ENCODE measurements at regions of chr15 and their contacts with region 1.

Region 1: GRCh38 chr15:76190834-76191538 is 120.3 kb downstream of the ETFA start:
- DNase-seq: peak; percentile 88
- H3K4me3 ChIP-seq: peak overlapping the region; percentile 14
- H3K27ac ChIP-seq: no peak overlapping the region
- H3K4me1 ChIP-seq: no peaks in the 10 kb centered on the region
- H3K27me3 ChIP-seq: no peaks in the 10 kb centered on the region
- CTCF ChIP-seq: peak; percentile 46 to 94 (median 86)
- POLR2A ChIP-seq: no peak

Region 2: GRCh38 chr15:76285239-76285825 is 94.3 kb after region 1 on chr15:
- intact Hi-C with region 1: no loop called
- DNase-seq: no peak
- H3K4me3 ChIP-seq: no peak overlapping the region
- H3K27ac ChIP-seq: no peak overlapping the region
- H3K4me1 ChIP-seq: no peaks in the 10 kb centered on the region
- H3K27me3 ChIP-seq: no peaks in the 10 kb centered on the region
- CTCF ChIP-seq: peak in 1 of 4 experiments; percentile 32
- POLR2A ChIP-seq: no peak

Region 3: GRCh38 chr15:76311100-76311953 is 120.3 kb after region 1 on chr15 and contains the start of gene ETFA:
- intact Hi-C with region 1: loop called (anchors 10 kb)
- DNase-seq: peak; percentile 94
- H3K4me3 ChIP-seq: peak within 1 kb of the TSS; percentile 60 to 70
- H3K27ac ChIP-seq: peak within 1 kb of the TSS; percentile 72 to 79
- H3K4me1 ChIP-seq: no peaks in the 10 kb centered on the region
- H3K27me3 ChIP-seq: no peaks in the 10 kb centered on the region
- CTCF ChIP-seq: peak in 1 of 4 experiments; percentile 13
- POLR2A ChIP-seq: peak; percentile 96
- total RNA-seq, gene ETFA: 68.6 to 82.8 TPM

Region 4: DNA sequence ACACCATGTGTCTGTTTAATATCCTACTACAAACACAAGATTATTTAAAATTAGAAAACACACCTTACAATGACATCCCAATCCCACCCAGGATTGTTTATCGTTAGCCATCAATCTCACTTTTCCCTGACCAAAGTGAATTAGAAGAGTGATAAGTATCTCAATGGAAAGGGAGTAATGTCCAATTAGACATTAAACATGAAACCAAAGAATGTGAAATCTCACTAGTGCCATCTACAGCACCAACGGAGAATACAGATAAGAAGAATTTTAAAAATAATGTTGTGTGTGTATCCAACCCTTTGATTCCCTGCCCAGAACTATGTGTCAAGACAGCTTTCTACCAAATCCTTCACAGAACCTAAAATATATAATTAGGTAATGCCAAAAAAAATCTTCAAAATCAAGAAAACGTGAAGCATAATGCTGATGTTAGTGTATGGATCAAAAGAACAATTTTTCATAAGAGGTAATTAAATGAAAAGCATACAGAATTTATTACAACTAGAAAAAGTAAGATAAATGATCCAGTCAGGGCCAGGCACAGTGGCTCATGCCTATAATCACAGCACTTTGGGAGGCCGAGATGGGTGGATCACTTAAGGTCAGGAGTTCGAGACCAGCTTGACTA is 650.0 kb after region 1 on chr15:
- intact Hi-C with region 1: loop called (anchors 5 kb)
- DNase-seq: no peak
- H3K4me3 ChIP-seq: no peak overlapping the region
- H3K27ac ChIP-seq: no peak overlapping the region
- H3K4me1 ChIP-seq: no peaks in the 10 kb centered on the region
- H3K27me3 ChIP-seq: no peaks in the 10 kb centered on the region
- CTCF ChIP-seq: peak in 3 of 4 experiments; percentile 26 to 46 (median 45)
- POLR2A ChIP-seq: no peak

Measured in prostate gland (tissue), 2 donors.